Colonic mucosa (tissue), 4 donors: ENCODE measurements at regions of chr6 and their contacts with region 1.

Region 1: GRCh38 chr6:52419809-52420670 is at the start of gene EFHC1:
- DNase-seq: peak; percentile 99
- H3K4me3 ChIP-seq: peak within 1 kb of the TSS; percentile 79
- H3K27ac ChIP-seq: peak within 1 kb of the TSS; percentile 47
- H3K4me1 ChIP-seq: peaks cover 5% of the 10 kb centered on the region
- H3K27me3 ChIP-seq: no peaks in the 10 kb centered on the region
- CTCF ChIP-seq: no peak
- total RNA-seq, gene EFHC1: 6.2 to 9.5 TPM

Region 2: DNA sequence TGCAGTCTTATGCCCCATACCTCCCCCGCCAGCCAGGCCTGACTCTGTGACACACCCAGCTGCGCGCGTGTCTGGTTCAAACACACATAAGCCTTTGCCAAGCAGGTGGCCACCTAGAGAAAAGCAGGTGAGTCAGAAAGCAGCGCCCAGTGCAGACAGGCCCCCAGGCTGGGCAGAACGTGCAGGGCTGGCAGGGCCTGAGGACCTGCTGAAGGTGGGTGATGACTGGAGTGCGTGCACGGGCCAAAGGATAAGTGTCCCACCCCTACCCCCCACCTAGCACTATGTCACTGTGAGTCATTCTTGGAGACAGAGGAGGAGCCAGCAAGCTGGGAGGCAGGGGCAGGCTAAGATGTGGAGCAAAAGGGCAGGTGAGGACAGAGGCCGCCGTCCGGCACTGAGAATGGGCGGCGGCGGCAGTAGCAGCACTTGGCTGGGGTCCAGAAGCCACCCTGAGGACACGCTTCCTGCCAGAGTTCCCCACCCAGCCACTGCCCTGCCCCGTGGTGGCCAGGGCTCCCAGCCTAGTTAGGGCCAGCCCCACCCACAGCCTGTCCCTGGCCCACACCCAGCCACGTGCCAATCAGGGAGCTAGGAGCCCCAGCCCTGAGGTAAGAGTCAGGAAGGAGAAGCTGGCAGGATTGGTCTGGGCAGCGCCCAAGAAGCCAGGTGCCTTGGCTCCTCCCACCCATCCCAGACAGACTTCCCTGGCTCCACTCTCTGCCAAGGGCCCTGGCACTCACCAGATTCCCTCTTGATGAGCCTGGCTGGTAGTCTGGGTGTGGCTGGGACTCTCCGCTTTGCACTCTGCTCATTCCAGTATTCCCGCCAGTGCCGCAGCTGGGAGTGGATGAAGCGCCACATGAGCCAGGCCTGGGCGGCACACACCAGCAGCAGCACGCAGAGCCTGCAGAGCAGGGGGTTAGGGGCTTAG is 84.1 kb after region 1 on chr6:
- intact Hi-C with region 1: loop called (anchors 5 kb)
- DNase-seq: peak; percentile 99
- H3K4me3 ChIP-seq: no peak overlapping the region
- H3K27ac ChIP-seq: peak overlapping the region; percentile 54
- H3K4me1 ChIP-seq: peaks cover 4% of the 10 kb centered on the region
- H3K27me3 ChIP-seq: no peaks in the 10 kb centered on the region
- CTCF ChIP-seq: no peak

Region 3: GRCh38 chr6:52522151-52522626 is 102.1 kb after region 1 on chr6:
- intact Hi-C with region 1: no loop called
- DNase-seq: no peak
- H3K4me3 ChIP-seq: no peak overlapping the region
- H3K27ac ChIP-seq: no peak overlapping the region
- H3K4me1 ChIP-seq: peaks cover 4% of the 10 kb centered on the region
- H3K27me3 ChIP-seq: no peaks in the 10 kb centered on the region
- CTCF ChIP-seq: no peak